A549 (cell line): ENCODE measurements at regions of chr20 and their contacts with region 1.

Region 1: GRCh38 chr20:43558412-43559146 is at the start of gene SGK2:
- DNase-seq: peak; percentile 87 to 90
- ATAC-seq: peak; percentile 93 to 94
- H3K4me3 ChIP-seq: peak within 1 kb of the TSS; percentile 22; the same call in 1 of the 3 replicates
- H3K27ac ChIP-seq: peak within 1 kb of the TSS; percentile 97
- H3K4me1 ChIP-seq: peaks cover 40% of the 10 kb centered on the region
- CTCF ChIP-seq: no peak
- EP300 ChIP-seq: no peak
- POLR2A ChIP-seq: peak; percentile 33
- RAD21 ChIP-seq: no peak; a peak in 1 of 5 replicates
- polyA plus RNA-seq, gene SGK2: 9.4 and 10.4 TPM in 2 replicates

Region 2: DNA sequence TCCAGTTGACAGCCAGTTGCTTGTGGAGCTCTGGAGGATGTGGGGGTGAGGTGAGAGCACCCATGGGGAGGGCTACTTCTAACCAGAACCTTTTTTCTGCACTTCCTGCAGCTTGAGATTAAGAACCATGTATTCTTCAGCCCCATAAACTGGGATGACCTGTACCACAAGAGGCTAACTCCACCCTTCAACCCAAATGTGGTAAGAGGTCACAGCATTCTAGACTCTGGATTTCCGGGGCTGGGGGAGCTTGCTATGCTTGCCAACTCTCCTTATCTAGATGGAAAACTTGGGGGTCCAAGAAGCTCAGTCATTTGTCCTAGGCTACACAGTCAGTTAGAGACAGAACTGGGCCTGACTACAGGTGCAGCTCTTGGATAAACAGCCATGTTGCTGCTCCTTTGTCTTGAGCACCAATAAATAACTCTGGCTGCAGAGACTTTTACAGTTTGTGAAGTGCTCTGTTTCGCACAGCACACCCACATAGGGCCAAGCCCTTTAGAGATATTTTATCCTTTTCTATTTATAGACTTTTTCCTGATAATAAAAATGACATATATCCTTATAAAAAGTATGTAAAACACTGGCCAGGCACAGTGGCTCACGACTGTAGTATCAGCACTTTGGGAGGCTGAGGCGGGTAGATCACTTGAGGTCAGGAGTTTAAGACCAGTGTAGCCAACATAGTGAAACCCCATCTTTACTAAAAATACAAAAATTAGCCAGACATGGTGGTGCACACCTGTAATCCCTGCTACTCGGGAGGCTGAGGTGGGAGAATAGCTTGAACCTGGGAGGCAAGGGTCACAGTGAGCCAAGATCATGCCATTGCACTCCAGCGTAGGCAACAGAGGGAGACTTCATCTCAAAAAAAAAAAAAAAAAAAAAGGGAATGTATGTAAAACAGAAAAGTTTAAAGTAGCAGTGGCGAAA is 21.5 kb after region 1 on chr20:
- CTCF ChIA-PET with region 1: no interaction called
- POLR2A ChIA-PET with region 1: no interaction called
- DNase-seq: no peak
- ATAC-seq: no peak
- H3K4me3 ChIP-seq: no peak overlapping the region
- H3K27ac ChIP-seq: no peak overlapping the region
- H3K4me1 ChIP-seq: no peaks in the 10 kb centered on the region
- CTCF ChIP-seq: no peak
- EP300 ChIP-seq: no peak
- POLR2A ChIP-seq: no peak
- RAD21 ChIP-seq: no peak

Region 3: DNA sequence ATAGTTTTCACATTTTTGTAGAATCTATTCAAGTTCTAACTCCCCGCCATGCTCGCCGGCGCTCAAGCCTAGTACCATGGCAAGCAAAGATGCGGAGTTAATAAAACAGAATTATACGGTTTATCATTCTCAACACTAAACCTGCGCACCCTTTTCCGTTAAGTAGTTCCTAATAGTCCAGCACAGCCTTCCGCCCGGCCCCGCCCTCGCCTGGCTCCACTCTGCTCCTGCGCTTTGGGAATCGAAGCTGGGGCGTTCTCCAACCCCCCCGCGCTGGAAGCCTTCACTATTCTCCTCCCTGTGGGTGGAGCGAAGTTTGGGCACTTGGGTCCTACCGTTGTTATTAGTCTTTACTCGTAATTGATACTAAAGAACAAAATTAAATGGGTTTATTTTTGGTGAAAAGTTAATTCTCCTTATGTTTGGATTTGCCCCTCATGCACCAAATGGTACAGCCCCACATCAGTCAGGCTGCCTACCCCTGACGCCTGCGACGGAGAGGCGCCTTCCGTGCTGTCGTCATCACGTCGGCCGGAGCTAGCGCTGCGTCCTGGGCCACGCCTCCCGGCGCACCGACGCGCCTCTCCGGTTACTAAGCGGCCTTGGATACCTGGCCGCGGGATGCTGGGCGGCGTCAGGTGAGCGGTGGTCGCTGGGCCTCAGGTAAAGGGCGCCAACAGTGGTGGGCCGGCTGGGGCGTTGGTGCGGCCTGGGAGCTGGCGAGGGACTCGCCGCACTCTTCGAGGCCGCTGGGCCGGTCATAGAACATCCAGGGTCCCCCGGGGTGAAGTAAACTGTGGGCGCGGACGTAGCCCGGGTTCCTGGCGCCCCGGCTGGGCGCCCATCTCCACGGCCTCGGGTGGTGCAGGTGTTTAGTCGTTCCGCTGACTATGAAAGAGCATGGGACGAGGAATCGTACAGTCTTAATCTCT is 32.1 kb after region 1 on chr20 and contains the start of gene IFT52:
- CTCF ChIA-PET with region 1: interaction called, 3 read pairs
- POLR2A ChIA-PET with region 1: interaction called, 12 read pairs
- DNase-seq: peak; percentile 84 to 93
- ATAC-seq: peak; percentile 99
- H3K4me3 ChIP-seq: peak within 1 kb of the TSS; percentile 71
- H3K27ac ChIP-seq: peak within 1 kb of the TSS; percentile 82 to 86
- H3K4me1 ChIP-seq: peaks cover 18% of the 10 kb centered on the region; the same call in 2 of the 3 replicates
- CTCF ChIP-seq: no peak
- EP300 ChIP-seq: no peak
- POLR2A ChIP-seq: peak; percentile 84
- RAD21 ChIP-seq: 0 out of 5 replicates have a peak, but pooled peaks of 1 of the 2 experiments have one; percentile 3
- polyA plus RNA-seq, gene IFT52: 42.2 and 49.0 TPM in 2 replicates

Region 4: GRCh38 chr20:43666376-43667328 is 108.1 kb after region 1 on chr20 and contains the start of gene MYBL2:
- CTCF ChIA-PET with region 1: no interaction called
- POLR2A ChIA-PET with region 1: no interaction called
- DNase-seq: peak; percentile 36 to 70
- ATAC-seq: peak; percentile 84 to 88
- H3K4me3 ChIP-seq: peak within 1 kb of the TSS; percentile 67
- H3K27ac ChIP-seq: peak within 1 kb of the TSS; percentile 68 to 95
- H3K4me1 ChIP-seq: peaks cover 29% of the 10 kb centered on the region
- CTCF ChIP-seq: no peak
- EP300 ChIP-seq: no peak
- POLR2A ChIP-seq: peak; percentile 50; the same call in 1 of the 2 replicates
- RAD21 ChIP-seq: no peak
- polyA plus RNA-seq, gene MYBL2: 19.9 and 22.1 TPM in 2 replicates